ENCODE measurements at regions of chr2 and their contacts with region 1.

Region 1: GRCh38 chr2:101883863-101884262 is 107.9 kb upstream of the IL1R2 start:
- DNase-seq: peak; percentile 30 to 67 (median 50)
- H3K4me3 ChIP-seq: no peak overlapping the region
- H3K27ac ChIP-seq: no peak overlapping the region
- H3K4me1 ChIP-seq: peaks cover 3 to 6% of the 10 kb centered on the region in 2 donors
- H3K27me3 ChIP-seq: no peaks in the 10 kb centered on the region
- CTCF ChIP-seq: peak; percentile 55 to 80 (median 68)
- POLR2A ChIP-seq: no peak

Region 2: DNA sequence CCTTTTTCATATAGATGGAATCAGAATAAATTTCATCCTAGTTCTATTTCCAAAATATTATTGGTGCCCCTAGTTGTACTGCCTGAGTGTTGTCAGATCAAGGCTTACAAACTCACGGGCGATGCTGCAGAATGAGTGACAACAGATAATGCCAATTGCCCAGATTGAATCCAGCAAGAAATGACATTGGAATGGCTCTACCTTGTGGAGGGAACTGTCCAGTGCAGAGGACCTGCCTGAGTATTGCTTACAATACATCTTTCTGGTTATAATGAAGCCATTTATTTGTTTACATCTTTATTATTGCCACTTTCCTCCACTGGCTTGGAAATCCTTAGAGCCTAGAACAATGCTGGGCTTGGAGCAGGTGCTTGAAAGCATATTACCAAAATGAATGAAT is 100.1 kb after region 1 on chr2:
- intact Hi-C with region 1: loop called in 1 of 2 experiments (anchors 10 kb)
- DNase-seq: peak in 1 of 7 donors; percentile 16
- H3K4me3 ChIP-seq: no peak overlapping the region
- H3K27ac ChIP-seq: no peak overlapping the region
- H3K4me1 ChIP-seq: peaks cover 0 to 9% of the 10 kb centered on the region in 2 donors
- H3K27me3 ChIP-seq: no peaks in the 10 kb centered on the region
- CTCF ChIP-seq: peak in 1 of 6 experiments; percentile 30
- POLR2A ChIP-seq: no peak

Region 3: GRCh38 chr2:101998896-101999789 is 115.3 kb after region 1 on chr2:
- intact Hi-C with region 1: no loop called
- DNase-seq: no peak
- H3K4me3 ChIP-seq: no peak overlapping the region
- H3K27ac ChIP-seq: no peak overlapping the region
- H3K4me1 ChIP-seq: peaks cover 3 to 4% of the 10 kb centered on the region in 2 donors
- H3K27me3 ChIP-seq: no peaks in the 10 kb centered on the region
- CTCF ChIP-seq: no peak
- POLR2A ChIP-seq: no peak

Region 4: DNA sequence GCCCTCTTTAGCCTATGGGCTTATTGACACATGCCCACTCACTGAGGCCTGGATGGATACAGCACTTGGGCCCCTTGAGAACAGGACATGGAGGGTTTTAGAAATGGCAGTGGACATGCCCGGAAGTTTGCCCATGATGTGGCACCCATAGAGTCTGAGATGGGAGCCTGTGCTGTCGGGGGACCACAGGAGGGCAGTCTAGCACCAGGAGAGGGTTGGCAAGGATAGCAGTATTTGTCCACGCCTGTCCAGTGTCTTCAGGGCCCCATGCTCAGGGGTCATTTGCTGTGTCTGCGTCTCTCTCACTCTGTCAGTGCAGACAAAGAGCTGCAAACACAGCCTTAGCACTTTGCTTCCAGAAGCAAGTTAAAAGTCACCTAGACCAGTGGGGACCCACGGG is 351.6 kb after region 1 on chr2:
- intact Hi-C with region 1: loop called (anchors 10 kb)
- DNase-seq: no peak
- H3K4me3 ChIP-seq: no peak overlapping the region
- H3K27ac ChIP-seq: no peak overlapping the region
- H3K4me1 ChIP-seq: peaks cover 0 to 4% of the 10 kb centered on the region in 2 donors
- H3K27me3 ChIP-seq: no peaks in the 10 kb centered on the region
- CTCF ChIP-seq: peak in 4 of 6 experiments; percentile 5 to 54 (median 35)
- POLR2A ChIP-seq: no peak

Region 5: GRCh38 chr2:102240640-102241370 is 356.9 kb after region 1 on chr2:
- intact Hi-C with region 1: loop called (anchors 10 kb)
- DNase-seq: peak; percentile 92 to 97 (median 95)
- H3K4me3 ChIP-seq: peak overlapping the region in 1 of 4 donors; percentile 36
- H3K27ac ChIP-seq: peak overlapping the region; percentile 83 to 93 (median 86)
- H3K4me1 ChIP-seq: peaks cover 0 to 6% of the 10 kb centered on the region in 2 donors
- H3K27me3 ChIP-seq: no peaks in the 10 kb centered on the region
- CTCF ChIP-seq: peak; percentile 96 to 99 (median 98)
- POLR2A ChIP-seq: peak in 1 of 2 donors; percentile 53

Region 6: DNA sequence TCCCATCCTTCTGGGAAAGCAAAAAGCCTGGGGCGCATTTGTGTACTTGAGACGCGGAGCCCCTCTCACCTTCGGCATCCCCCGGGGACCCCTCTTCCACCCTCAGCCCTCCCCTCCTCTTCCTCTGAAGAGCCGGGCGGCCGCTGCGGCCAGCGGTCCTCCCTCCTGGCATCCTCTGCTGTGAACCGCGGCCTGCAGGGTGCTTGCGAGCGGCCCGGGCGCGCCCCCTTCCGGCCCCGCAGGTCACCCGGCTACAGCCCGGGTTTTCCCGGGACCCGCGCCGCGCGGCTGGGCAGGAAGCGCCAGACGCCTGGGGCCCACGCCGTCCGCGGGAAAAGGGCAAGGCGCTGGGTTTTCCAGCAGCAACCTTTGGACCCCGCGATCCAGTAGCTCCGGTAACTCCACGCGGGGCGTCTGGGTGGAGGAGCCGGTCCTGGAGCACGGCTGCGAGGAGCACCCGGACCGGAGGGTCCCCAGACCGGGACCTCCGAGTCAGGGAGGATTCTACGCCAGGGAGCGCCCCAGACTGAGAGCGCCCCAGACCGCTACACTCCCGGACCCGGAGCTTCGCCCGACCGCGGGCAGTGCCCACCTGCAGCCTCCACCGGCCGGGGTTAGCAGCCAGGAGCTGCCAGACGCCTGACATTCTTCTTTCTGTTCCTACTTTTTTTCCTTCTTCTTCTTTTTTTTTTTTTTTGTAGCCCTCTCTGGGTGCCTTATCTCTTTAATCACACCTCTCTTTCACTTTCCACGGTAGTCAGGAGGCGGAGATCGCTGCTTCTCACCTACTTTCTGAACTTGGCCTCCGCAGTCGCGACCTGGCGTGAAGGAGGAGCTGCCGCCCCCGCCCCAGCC is 471.9 kb after region 1 on chr2 and contains the start of gene IL18R1:
- intact Hi-C with region 1: loop called in 1 of 2 experiments (anchors 10 kb)
- DNase-seq: peak; percentile 64 to 81 (median 75)
- H3K4me3 ChIP-seq: peak within 1 kb of the TSS in 3 of 4 donors; percentile 32 to 88 (median 36)
- H3K27ac ChIP-seq: peak within 1 kb of the TSS in 3 of 5 donors; percentile 29 to 72 (median 44)
- H3K4me1 ChIP-seq: peaks cover 0 to 4% of the 10 kb centered on the region in 2 donors
- H3K27me3 ChIP-seq: no peaks in the 10 kb centered on the region
- CTCF ChIP-seq: peak; percentile 43 to 87 (median 68)
- POLR2A ChIP-seq: peak in 1 of 2 donors; percentile 21
- total RNA-seq, gene IL18R1: 1.2 to 5.5 (median 4.3) TPM